ENCODE measurements at regions of chr19 and their contacts with region 1.

Region 1: DNA sequence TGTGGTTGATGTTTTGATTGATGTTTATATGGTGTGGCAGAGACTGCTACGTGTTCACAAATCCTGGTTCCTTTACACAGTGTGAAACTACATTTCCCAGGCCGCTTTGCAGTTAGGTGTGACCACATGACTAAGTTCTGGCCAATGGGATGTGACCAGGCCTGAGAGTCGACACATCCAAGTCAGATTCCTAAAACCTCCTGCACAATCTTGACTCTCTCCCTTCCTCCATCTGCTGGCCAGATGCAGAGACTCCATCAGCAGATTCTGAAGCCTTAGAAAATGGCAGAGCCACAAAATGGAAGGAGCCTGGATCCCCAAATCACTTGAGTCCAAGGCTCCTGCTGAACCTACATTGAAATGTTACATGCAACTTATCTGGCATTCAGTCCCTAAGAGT is 12.6 kb downstream of the CD37 start:
- DNase-seq: no peak
- ATAC-seq: peak; percentile 91

Region 2: DNA sequence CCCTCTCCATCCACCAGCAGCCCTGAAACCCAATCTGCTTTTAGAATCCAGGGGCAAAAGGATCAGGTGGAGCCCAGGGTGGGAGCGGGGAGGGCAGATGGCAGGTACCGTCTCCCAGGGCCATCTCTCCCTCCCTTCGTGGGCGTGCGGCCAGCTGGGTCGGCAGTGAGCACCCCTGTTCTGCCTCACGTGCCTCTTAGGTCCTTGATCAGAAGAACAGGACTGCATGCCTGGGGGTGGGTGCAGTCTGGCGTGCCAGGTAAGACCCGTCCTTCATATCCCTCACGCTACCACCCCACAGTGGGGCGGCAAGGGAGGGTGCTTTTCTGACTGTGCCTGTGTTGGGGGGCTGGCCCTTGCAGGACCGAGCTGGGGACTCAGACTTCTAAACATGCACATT is 1878.1 kb before region 1 on chr19:
- intact Hi-C with region 1: loop called (anchors 5 kb)
- DNase-seq: no peak
- ATAC-seq: no peak

Region 3: GRCh38 chr19:47564081-47564480 is 1783.8 kb before region 1 on chr19:
- intact Hi-C with region 1: no loop called
- DNase-seq: no peak
- ATAC-seq: no peak

Region 4: DNA sequence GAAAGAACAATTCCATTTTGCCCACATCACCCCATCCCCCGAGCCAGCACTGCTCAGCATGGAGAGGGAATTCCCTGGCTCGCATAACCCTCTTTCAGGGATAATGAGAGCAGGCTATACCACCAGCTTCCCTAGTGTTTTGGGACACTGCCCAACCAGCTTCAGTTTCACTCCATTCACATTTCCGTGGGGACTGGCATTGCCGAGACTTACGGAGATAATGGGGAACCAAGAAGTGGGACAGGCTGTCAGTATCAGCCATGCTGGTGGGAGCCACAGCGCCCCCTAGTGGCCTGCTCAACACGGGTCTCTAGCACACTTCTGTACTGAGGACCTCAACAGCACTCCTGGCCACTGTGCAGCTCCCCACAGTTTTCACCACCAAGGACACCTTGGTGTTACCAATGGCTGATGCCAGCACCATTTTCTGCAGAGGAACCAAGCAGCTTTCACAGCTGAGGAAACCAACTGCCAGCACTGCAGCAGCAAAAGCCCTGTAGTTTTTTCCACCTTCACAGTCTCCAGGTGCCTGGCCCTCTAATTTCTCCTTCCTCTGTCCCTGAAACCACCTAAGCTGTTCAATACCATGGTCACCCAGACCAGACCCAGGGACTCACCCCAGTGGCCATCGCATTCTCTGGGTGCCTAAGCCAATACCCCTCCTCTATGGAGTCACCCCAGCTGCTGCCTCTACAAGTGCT is 46.5 kb before region 1 on chr19:
- intact Hi-C with region 1: no loop called
- DNase-seq: peak; percentile 82
- ATAC-seq: peak; percentile 68

Region 5: GRCh38 chr19:49546825-49547565 is 199.1 kb after region 1 on chr19:
- intact Hi-C with region 1: no loop called
- DNase-seq: peak; percentile 81
- ATAC-seq: peak; percentile 91

Measured in sciatic nerve (tissue), 2 donors.